RWPE1 (cell line): ENCODE measurements at regions of chr11 and their contacts with region 1.

Region 1: GRCh38 chr11:61797263-61797944 is 4.7 kb downstream of the FEN1 start:
- DNase-seq: peak; percentile 62
- H3K27ac ChIP-seq: no peak overlapping the region
- CTCF ChIP-seq: peak; percentile 81

Region 2: DNA sequence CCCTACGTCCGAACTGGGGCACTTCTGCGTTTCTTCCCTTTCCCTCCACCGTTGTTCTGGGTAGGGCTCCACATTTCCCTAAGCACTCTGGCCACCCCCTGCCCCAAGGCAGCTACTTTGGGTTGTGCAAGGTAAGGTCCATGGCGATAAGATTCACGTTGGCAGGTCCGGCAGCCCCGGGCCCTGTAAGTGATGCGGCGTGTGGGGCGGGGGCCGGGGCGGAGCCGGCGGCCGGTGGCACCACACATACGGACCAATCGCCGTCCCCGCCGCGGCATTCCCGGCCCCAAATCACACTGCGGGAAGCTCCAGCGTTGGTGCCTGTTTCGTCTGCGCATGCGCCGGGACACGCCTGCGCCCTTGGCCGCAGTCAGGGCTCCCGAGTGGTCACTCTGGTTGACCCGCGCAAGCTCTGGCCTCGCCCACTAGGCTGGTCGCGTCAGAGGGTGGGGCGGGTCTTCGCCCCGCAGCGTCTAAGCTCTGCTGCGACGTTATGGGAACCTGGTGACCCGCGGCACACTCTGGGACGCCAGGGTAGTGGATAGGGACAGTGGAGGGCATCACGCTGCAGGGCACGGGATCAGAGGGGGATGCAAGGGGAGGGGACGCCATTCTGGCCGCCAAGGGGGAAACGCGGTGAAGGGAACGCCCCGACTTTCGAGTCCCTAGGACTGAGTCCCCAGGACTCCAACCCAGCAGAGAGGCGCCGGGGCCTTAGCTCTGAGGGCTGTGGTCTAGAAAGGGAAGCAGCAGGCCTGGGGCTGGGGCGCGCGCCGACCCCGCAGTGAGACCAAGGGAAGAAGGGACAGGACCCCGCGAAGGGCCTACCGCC is 17.8 kb after region 1 on chr11:
- CTCF ChIA-PET with region 1: interaction called, 3 read pairs
- POLR2A ChIA-PET with region 1: interaction called, 17 read pairs
- DNase-seq: peak; percentile 87
- H3K27ac ChIP-seq: peak overlapping the region; percentile 97
- CTCF ChIP-seq: no peak

Region 3: GRCh38 chr11:61947486-61948210 is 150.2 kb after region 1 on chr11:
- CTCF ChIA-PET with region 1: interaction called, 17 read pairs
- POLR2A ChIA-PET with region 1: no interaction called
- DNase-seq: peak; percentile 81
- H3K27ac ChIP-seq: no peak overlapping the region
- CTCF ChIP-seq: peak; percentile 92

Region 4: GRCh38 chr11:62108017-62108750 is 310.8 kb after region 1 on chr11:
- CTCF ChIA-PET with region 1: interaction called, 14 read pairs
- POLR2A ChIA-PET with region 1: no interaction called
- DNase-seq: peak; percentile 59
- H3K27ac ChIP-seq: no peak overlapping the region
- CTCF ChIP-seq: peak; percentile 81